ENCODE measurements at regions of chr2 and their contacts with region 1.

Region 1: DNA sequence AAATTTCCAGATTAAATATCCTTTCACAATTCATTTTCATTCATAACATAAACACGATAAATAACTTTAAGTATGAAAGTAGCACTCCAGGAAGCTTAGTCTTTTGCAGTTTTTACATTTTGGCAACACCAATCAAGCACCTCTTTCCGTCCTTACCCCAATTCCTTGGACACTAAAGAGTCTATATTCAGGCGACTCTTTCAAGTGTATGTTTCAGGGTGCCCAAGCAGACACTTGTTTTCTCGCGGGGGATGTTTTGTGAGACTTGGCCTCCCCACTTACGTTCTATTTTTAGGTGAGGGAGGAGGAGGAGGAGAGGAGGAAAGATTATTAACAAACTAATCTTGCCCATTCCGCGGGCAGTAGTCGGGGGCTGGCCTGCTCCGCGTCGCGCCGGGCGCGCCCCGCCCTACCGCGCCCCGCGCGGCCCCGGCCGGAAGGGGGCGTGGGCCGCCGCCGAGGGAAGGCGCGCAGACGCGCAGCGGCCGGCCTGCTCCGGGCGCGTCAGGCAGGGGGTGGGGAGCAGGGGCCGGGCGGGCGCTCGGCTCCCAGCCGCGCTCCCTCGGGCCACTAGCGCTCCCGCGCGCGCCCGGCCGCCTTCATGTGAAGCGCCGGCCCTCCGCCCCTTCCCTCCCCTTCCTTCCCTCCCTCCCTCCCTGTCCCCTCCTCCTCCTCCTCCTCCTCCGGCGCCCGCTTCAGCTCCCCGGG is at the start of gene ITPRID2:
- DNase-seq: peak; percentile 97
- H3K4me3 ChIP-seq: peak within 1 kb of the TSS; percentile 82
- H3K27ac ChIP-seq: peak within 1 kb of the TSS; percentile 64
- H3K4me1 ChIP-seq: peaks cover 33% of the 10 kb centered on the region
- H3K27me3 ChIP-seq: no peaks in the 10 kb centered on the region
- total RNA-seq, gene ITPRID2: 52.7 and 95.4 TPM in 2 replicates

Region 2: GRCh38 chr2:180679693-180680092 is 1211.7 kb before region 1 on chr2:
- in situ Hi-C with region 1: no loop called
- DNase-seq: no peak
- H3K4me3 ChIP-seq: no peak overlapping the region
- H3K27ac ChIP-seq: no peak overlapping the region
- H3K4me1 ChIP-seq: peaks cover 21% of the 10 kb centered on the region
- H3K27me3 ChIP-seq: no peaks in the 10 kb centered on the region

Region 3: GRCh38 chr2:181008407-181008806 is 883.0 kb before region 1 on chr2:
- in situ Hi-C with region 1: no loop called
- DNase-seq: no peak
- H3K4me3 ChIP-seq: no peak overlapping the region
- H3K27ac ChIP-seq: no peak overlapping the region
- H3K4me1 ChIP-seq: peaks cover 24% of the 10 kb centered on the region
- H3K27me3 ChIP-seq: no peaks in the 10 kb centered on the region

Region 4: GRCh38 chr2:181586569-181587081 is 304.8 kb before region 1 on chr2:
- in situ Hi-C with region 1: no loop called
- DNase-seq: no peak
- H3K4me3 ChIP-seq: no peak overlapping the region
- H3K27ac ChIP-seq: no peak overlapping the region
- H3K4me1 ChIP-seq: no peaks in the 10 kb centered on the region
- H3K27me3 ChIP-seq: peaks cover 27% of the 10 kb centered on the region; the same call in 1 of the 2 replicates

Region 5: GRCh38 chr2:181752301-181752700 is 139.1 kb before region 1 on chr2:
- in situ Hi-C with region 1: loop called (anchors 10 kb)
- DNase-seq: no peak
- H3K4me3 ChIP-seq: no peak overlapping the region
- H3K27ac ChIP-seq: no peak overlapping the region
- H3K4me1 ChIP-seq: no peaks in the 10 kb centered on the region
- H3K27me3 ChIP-seq: peaks cover 7% of the 10 kb centered on the region; the same call in 1 of the 2 replicates

Region 6: GRCh38 chr2:182049372-182050148 is 158.1 kb after region 1 on chr2:
- in situ Hi-C with region 1: no loop called
- DNase-seq: no peak
- H3K4me3 ChIP-seq: no peak overlapping the region
- H3K27ac ChIP-seq: no peak overlapping the region
- H3K4me1 ChIP-seq: no peaks in the 10 kb centered on the region
- H3K27me3 ChIP-seq: no peaks in the 10 kb centered on the region

Measured in GM23248 (cell line).